RWPE1 (cell line): ENCODE measurements at regions of chr2 and their contacts with region 1.

Region 1: DNA sequence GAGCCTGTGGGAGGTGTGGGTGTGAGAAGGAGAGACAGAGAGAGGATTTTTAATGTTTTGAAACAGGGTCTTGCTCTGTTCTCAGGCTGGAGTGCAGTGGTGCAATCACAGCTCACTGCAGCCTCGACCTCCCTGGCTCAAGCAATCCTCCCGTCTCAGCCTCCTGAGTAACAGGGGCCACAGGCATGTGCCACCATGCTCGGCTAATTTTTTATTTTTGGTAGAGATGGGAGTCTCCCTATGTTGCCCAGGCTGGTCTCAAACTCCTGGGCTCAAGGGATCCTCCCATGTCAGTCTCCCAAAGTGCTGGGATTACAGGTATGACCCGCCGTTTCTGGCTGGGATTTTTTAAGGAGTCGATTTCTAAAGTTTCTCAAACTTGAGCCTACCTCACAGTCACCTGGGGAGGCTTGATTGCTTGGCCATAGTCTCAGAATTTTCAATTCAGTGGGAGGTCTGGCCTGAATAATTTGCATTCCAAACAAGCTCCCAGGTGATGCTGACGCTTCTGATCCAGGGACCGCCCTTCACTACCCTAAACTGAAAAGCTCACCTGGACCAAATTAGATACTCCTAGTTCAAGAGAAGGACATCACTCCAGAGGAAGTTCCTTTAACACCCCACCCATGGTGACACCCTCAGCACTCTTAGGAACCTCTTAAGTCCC is 70.8 kb upstream of the SLC1A4 start:
- DNase-seq: no peak
- H3K27ac ChIP-seq: peak overlapping the region; percentile 67
- CTCF ChIP-seq: no peak

Region 2: GRCh38 chr2:65040400-65041261 is 122.3 kb after region 1 on chr2:
- CTCF ChIA-PET with region 1: interaction called, 15 read pairs
- POLR2A ChIA-PET with region 1: no interaction called
- DNase-seq: peak; percentile 86
- H3K27ac ChIP-seq: no peak overlapping the region
- CTCF ChIP-seq: peak; percentile 95

Region 3: GRCh38 chr2:65204461-65205210 is 286.3 kb after region 1 on chr2:
- CTCF ChIA-PET with region 1: no interaction called
- POLR2A ChIA-PET with region 1: no interaction called
- DNase-seq: no peak
- H3K27ac ChIP-seq: no peak overlapping the region
- CTCF ChIP-seq: no peak